B cell (primary cell): ENCODE measurements at regions of chr1 and their contacts with region 1.

Region 1: GRCh38 chr1:27365372-27366112 is 1.2 kb downstream of the MAP3K6 start:
- DNase-seq: peak; percentile 88
- ATAC-seq: peak; percentile 70
- H3K4me3 ChIP-seq: peak overlapping the region; percentile 32 to 74 (median 60)
- H3K4me3 Mint-ChIP-seq: peak overlapping the region; percentile 93
- H3K27ac ChIP-seq: no peak overlapping the region
- H3K27ac Mint-ChIP-seq: peak overlapping the region; percentile 82
- H3K4me1 ChIP-seq: peaks cover 33 to 47% of the 10 kb centered on the region in 2 donors
- H3K4me1 Mint-ChIP-seq: peaks cover 54% of the 10 kb centered on the region
- H3K27me3 ChIP-seq: no peaks in the 10 kb centered on the region
- H3K27me3 Mint-ChIP-seq: no peaks in the 10 kb centered on the region
- CTCF ChIP-seq: no peak

Region 2: DNA sequence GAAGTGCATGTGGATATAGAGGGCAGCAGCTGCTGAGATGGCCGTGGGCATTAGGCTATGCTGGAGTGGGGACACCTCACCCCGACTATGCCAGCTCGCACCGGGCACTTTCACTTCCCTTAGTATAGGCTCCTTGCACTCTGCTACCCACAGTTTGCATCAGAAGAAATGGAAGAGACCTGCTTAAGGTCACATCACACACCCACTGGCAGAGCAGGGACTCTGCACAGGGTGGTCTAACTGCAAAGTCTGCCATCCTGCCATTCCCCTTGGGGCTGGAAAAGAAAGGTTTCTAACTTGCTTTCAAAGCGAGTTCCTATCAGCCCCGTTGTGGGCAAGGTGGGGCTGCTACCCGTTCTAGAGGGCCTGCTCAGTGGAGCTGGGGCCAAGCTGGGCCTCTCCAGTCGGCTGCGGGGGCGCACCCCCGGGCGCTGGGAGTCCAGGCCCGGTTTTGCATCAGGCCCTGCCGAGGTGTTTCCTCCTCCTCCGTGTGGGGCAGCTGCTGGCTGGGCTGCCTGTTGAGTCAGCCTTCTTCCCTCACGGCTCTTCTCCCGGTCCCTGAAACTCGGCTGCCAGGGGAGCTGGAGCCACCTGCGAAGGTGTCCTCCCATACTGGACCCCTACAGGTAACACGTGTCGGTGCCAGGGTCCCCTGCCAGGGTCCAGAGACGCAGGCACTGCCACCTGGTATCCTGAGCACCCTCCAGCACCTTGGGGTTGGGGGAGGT is 23.9 kb before region 1 on chr1 and contains the start of gene SYTL1:
- CTCF ChIA-PET with region 1: interaction called, 132 read pairs
- POLR2A ChIA-PET with region 1: interaction called, 14 read pairs
- intact Hi-C with region 1: loop called (anchors 1 kb)
- DNase-seq: peak; percentile 89
- ATAC-seq: peak; percentile 78
- H3K4me3 ChIP-seq: peak within 1 kb of the TSS; percentile 61 to 89 (median 79)
- H3K4me3 Mint-ChIP-seq: peak within 1 kb of the TSS; percentile 96
- H3K27ac ChIP-seq: peak within 1 kb of the TSS; percentile 85 to 88
- H3K27ac Mint-ChIP-seq: peak within 1 kb of the TSS; percentile 98
- H3K4me1 ChIP-seq: peaks cover 37 to 59% of the 10 kb centered on the region in 2 donors
- H3K4me1 Mint-ChIP-seq: peaks cover 64% of the 10 kb centered on the region
- H3K27me3 ChIP-seq: no peaks in the 10 kb centered on the region
- H3K27me3 Mint-ChIP-seq: no peaks in the 10 kb centered on the region
- CTCF ChIP-seq: no peak
- total RNA-seq, gene SYTL1: 156 and 159 TPM in 2 replicates

Region 3: DNA sequence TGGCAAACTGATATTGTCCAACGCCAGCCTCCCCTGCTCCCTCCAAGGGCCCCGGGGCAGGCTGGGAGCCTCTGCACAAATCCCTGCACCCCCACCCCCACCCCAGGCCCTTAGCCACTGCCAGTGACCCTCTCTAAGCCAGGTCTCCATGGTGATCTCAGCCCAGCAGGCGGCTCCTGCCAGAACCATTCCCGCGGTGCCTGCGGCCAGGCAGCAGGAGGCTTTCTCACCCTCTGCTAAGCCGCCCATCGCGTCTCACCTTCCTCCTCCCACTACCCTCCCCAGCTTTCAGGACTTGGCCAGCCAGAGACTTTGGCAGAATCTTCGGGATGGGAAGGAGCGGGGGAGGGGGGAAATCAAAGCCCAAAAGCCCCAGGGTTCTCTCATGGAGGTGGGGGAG is 171.2 kb after region 1 on chr1:
- CTCF ChIA-PET with region 1: no interaction called
- POLR2A ChIA-PET with region 1: no interaction called
- intact Hi-C with region 1: no loop called
- DNase-seq: no peak
- ATAC-seq: no peak
- H3K4me3 ChIP-seq: no peak overlapping the region
- H3K4me3 Mint-ChIP-seq: no peak overlapping the region
- H3K27ac ChIP-seq: no peak overlapping the region
- H3K27ac Mint-ChIP-seq: no peak overlapping the region
- H3K4me1 ChIP-seq: no peaks in the 10 kb centered on the region
- H3K4me1 Mint-ChIP-seq: no peaks in the 10 kb centered on the region
- H3K27me3 ChIP-seq: no peaks in the 10 kb centered on the region
- H3K27me3 Mint-ChIP-seq: no peaks in the 10 kb centered on the region
- CTCF ChIP-seq: no peak

Region 4: GRCh38 chr1:27785781-27786455 is 420.4 kb after region 1 on chr1:
- CTCF ChIA-PET with region 1: no interaction called
- POLR2A ChIA-PET with region 1: no interaction called
- intact Hi-C with region 1: no loop called
- DNase-seq: no peak
- ATAC-seq: no peak
- H3K4me3 ChIP-seq: no peak overlapping the region
- H3K4me3 Mint-ChIP-seq: no peak overlapping the region
- H3K27ac ChIP-seq: no peak overlapping the region
- H3K27ac Mint-ChIP-seq: no peak overlapping the region
- H3K4me1 ChIP-seq: no peaks in the 10 kb centered on the region
- H3K4me1 Mint-ChIP-seq: peaks cover 17% of the 10 kb centered on the region
- H3K27me3 ChIP-seq: no peaks in the 10 kb centered on the region
- H3K27me3 Mint-ChIP-seq: no peaks in the 10 kb centered on the region
- CTCF ChIP-seq: no peak

Region 5: DNA sequence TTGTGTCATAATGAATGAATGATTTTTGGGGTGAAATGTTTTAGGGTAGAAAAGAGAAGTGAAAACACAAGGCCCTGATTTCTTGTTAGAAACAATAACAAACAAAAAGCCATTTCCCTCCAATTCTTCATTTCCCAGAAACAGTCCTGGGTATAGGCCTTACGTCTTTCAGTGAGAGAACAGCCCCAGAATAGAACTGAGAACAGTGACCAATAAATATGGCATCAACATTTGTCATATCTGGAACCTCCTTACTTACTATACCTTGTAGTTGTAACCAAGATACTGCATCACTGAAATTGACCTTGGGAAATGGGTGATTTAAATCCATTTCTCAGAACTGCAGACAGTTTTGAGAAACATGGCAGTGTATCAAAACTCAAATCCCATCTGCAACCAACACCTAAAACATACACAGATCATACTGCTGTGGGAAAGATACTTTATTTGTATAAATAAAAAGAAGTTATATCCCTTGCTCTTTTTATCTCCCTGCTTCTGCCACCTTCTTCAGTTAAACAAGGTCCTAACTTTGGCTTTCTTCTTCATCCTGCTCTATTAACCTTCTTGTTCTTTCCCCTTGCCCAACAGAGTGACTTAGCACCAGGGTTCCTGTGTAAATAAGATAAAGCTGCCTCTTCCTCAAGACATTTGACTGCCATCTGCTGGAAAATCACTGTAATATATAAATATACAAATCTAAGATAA is 613.8 kb after region 1 on chr1:
- CTCF ChIA-PET with region 1: no interaction called
- POLR2A ChIA-PET with region 1: no interaction called
- intact Hi-C with region 1: no loop called
- DNase-seq: peak; percentile 72
- ATAC-seq: peak; percentile 51
- H3K4me3 ChIP-seq: no peak overlapping the region
- H3K4me3 Mint-ChIP-seq: no peak overlapping the region
- H3K27ac ChIP-seq: no peak overlapping the region
- H3K27ac Mint-ChIP-seq: peak overlapping the region; percentile 2
- H3K4me1 ChIP-seq: peaks cover 0 to 7% of the 10 kb centered on the region in 2 donors
- H3K4me1 Mint-ChIP-seq: peaks cover 4% of the 10 kb centered on the region
- H3K27me3 ChIP-seq: no peaks in the 10 kb centered on the region
- H3K27me3 Mint-ChIP-seq: no peaks in the 10 kb centered on the region
- CTCF ChIP-seq: peak; percentile 81